H1 (cell line): ENCODE measurements at regions of chr11 and their contacts with region 1.

Region 1: DNA sequence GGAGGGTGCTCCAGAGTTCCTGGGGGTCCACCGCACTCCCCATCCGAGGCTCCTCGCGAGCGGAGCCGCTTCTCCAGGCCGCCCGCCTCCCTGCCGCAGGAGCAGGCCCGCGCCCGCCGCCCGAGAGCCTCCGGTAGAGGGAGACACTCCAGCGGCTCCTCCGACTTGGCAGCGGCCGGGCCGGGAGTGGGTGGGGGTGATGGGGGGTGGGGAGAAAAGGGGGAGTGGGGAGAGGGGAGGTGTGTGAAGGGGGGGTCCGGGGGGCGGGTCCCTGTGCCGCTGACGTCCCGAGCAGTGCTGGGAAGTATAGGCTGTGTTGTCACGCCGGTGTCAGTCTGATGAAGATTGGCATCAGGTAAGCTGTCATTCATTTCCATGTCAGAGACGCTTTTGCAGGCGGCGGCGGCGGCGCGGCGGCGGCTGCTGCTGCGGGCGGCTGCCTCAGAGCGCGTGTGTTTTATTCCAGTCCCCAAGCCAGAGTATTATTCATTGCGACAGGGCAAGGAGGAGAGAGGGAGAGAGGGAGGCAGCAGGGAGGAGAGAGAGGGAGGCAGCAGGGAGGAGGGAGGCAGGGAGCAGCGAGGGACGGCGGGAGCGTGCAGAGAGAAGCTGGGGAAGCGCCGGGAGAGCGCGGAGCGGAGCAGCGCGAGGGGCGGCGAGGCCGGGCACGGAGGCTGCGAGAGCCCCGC is at the start of gene PKNOX2:
- DNase-seq: peak in 1 of 2 experiments; percentile 93
- H3K4me3 ChIP-seq: peak within 1 kb of the TSS; percentile 52 to 74 (median 60)
- H3K27ac ChIP-seq: peak within 1 kb of the TSS; percentile 87
- H3K4me1 ChIP-seq: peaks cover 21 to 44% (median 29%) of the 10 kb centered on the region in 4 experiments
- H3K27me3 ChIP-seq: peaks cover 14 to 44% (median 40%) of the 10 kb centered on the region in 4 experiments
- CTCF ChIP-seq: peak; percentile 45 to 72 (median 67)
- EP300 ChIP-seq: peak in 1 of 2 experiments; percentile 6; a peak in 1 of 3 replicates
- POLR2A ChIP-seq: no peak
- RAD21 ChIP-seq: peak; percentile 54 to 68; a peak in 3 of 4 replicates
- total RNA-seq, gene PKNOX2: 1.9 and 2.0 TPM in 2 replicates

Region 2: GRCh38 chr11:125176866-125177265 is 12.3 kb after region 1 on chr11:
- CTCF ChIA-PET with region 1: interaction called, 10 read pairs
- POLR2A ChIA-PET with region 1: interaction called, 4 read pairs
- DNase-seq: no peak
- H3K4me3 ChIP-seq: no peak overlapping the region
- H3K27ac ChIP-seq: no peak overlapping the region
- H3K4me1 ChIP-seq: peaks cover 1 to 25% (median 6%) of the 10 kb centered on the region in 4 experiments; a peak in 4 of 7 replicates
- H3K27me3 ChIP-seq: no peaks in the 10 kb centered on the region; a peak in 1 of 7 replicates
- CTCF ChIP-seq: no peak
- EP300 ChIP-seq: no peak
- POLR2A ChIP-seq: no peak
- RAD21 ChIP-seq: no peak

Region 3: DNA sequence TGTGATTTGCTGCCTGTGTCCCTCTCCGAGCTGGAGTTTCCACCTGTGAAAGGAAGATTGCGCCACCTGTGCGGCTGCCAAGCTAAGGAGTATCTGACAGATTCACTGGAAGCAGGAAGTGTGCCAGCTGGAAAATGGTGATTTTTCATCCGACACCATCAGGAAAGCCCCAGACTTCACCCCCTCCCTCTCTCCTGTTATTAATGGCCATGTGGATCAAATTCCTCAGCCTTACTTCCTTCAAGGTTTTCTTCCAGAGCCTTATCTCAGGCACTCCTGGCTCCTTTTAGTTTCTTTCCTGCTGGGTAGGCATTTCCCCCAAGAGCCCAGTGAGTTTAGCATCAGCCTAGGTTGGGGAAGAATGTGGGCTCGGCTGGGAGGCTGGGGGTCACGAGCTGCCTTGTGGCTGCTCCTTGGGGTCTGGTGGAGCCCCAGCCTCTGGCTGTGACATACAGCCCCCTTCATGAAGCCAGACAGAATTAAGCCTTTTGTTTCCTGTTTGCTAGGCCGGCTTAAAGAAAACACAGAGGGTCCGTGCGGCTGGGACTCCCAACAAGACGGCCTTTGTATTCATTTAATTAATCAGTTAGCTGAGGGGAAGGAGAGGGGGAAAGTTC is 37.1 kb after region 1 on chr11:
- CTCF ChIA-PET with region 1: interaction called, 11 read pairs
- POLR2A ChIA-PET with region 1: interaction called, 3 read pairs
- DNase-seq: no peak
- H3K4me3 ChIP-seq: no peak overlapping the region
- H3K27ac ChIP-seq: no peak overlapping the region
- H3K4me1 ChIP-seq: peaks cover 16 to 33% (median 25%) of the 10 kb centered on the region in 4 experiments
- H3K27me3 ChIP-seq: peaks cover 0 to 2% (median 0%) of the 10 kb centered on the region in 4 experiments; a peak in 2 of 7 replicates
- CTCF ChIP-seq: no peak
- EP300 ChIP-seq: no peak
- POLR2A ChIP-seq: no peak
- RAD21 ChIP-seq: no peak

Region 4: GRCh38 chr11:125279676-125280418 is 115.3 kb after region 1 on chr11:
- CTCF ChIA-PET with region 1: no interaction called
- POLR2A ChIA-PET with region 1: no interaction called
- DNase-seq: no peak
- H3K4me3 ChIP-seq: no peak overlapping the region
- H3K27ac ChIP-seq: no peak overlapping the region
- H3K4me1 ChIP-seq: peaks cover 0 to 2% (median 1%) of the 10 kb centered on the region in 4 experiments; a peak in 1 of 7 replicates
- H3K27me3 ChIP-seq: no peaks in the 10 kb centered on the region
- CTCF ChIP-seq: no peak
- EP300 ChIP-seq: no peak
- POLR2A ChIP-seq: no peak
- RAD21 ChIP-seq: no peak

Region 5: DNA sequence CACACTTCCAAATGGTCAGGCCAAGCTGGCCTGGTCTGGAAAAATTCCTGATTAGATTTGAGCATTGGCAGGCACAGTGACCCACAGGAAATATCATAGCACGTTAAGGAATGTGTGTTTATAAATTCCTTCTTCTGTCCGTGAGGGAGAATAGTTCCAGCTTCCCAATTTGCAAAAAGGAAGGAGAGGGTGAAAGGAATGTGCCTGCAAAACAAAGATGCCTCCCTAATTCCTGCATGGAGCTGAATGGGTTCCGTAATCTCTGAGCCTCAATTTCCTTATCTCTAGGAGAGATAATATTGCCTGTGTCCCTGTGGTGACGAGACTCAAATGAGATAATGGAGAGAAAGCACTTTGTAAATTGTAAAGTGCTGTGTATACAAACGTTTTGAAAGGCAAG is 226.4 kb after region 1 on chr11:
- CTCF ChIA-PET with region 1: no interaction called
- POLR2A ChIA-PET with region 1: no interaction called
- DNase-seq: no peak
- H3K4me3 ChIP-seq: no peak overlapping the region
- H3K27ac ChIP-seq: no peak overlapping the region
- H3K4me1 ChIP-seq: peaks cover 0 to 9% (median 7%) of the 10 kb centered on the region in 4 experiments; a peak in 6 of 7 replicates
- H3K27me3 ChIP-seq: no peaks in the 10 kb centered on the region
- CTCF ChIP-seq: no peak
- EP300 ChIP-seq: no peak
- POLR2A ChIP-seq: no peak
- RAD21 ChIP-seq: no peak